Caco-2 (cell line): ENCODE measurements at regions of chr5 and their contacts with region 1.

Region 1: GRCh38 chr5:88140856-88141752 is 127.5 kb downstream of the TMEM161B start:
- DNase-seq: peak; percentile 97 to 98
- H3K4me3 ChIP-seq: peak overlapping the region; percentile 52
- H3K4me3 Mint-ChIP-seq: no peak overlapping the region
- H3K27ac Mint-ChIP-seq: no peak overlapping the region
- H3K4me1 ChIP-seq: no peaks in the 10 kb centered on the region; the same call in 1 of the 2 replicates
- H3K4me1 Mint-ChIP-seq: no peaks in the 10 kb centered on the region
- H3K27me3 ChIP-seq: no peaks in the 10 kb centered on the region
- H3K27me3 Mint-ChIP-seq: peaks cover 2% of the 10 kb centered on the region
- CTCF ChIP-seq: peak; percentile 69 to 84

Region 2: GRCh38 chr5:87780831-87781760 is 360.0 kb before region 1 on chr5:
- CTCF ChIA-PET with region 1: interaction called, 6 read pairs
- POLR2A ChIA-PET with region 1: no interaction called
- intact Hi-C with region 1: loop called (anchors 1 kb)
- DNase-seq: peak; percentile 73 to 78
- H3K4me3 ChIP-seq: no peak overlapping the region
- H3K4me3 Mint-ChIP-seq: no peak overlapping the region
- H3K27ac Mint-ChIP-seq: no peak overlapping the region
- H3K4me1 ChIP-seq: no peaks in the 10 kb centered on the region
- H3K4me1 Mint-ChIP-seq: no peaks in the 10 kb centered on the region
- H3K27me3 ChIP-seq: no peaks in the 10 kb centered on the region
- H3K27me3 Mint-ChIP-seq: no peaks in the 10 kb centered on the region
- CTCF ChIP-seq: peak; percentile 86 to 92

Region 3: DNA sequence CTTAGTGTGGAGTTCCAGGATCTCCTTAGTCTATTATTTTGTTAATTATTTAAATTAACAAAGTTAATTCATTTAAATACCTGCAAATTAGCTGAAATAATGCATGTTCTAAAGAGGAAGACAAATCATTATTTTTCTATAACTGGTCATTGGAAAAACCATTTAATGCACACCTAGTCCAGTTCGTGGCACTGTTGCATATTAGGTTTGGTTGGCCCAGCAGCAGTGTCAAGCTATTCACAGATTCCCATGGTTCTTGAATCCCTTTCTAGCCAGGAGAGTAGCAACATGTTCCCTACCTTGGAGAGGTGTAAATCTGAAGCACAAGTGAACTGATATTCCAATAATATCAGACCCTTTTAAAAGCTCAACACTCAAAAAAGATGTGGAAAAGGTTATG is 27.7 kb before region 1 on chr5:
- CTCF ChIA-PET with region 1: no interaction called
- POLR2A ChIA-PET with region 1: no interaction called
- intact Hi-C with region 1: loop called (anchors 2 kb)
- DNase-seq: no peak
- H3K4me3 ChIP-seq: no peak overlapping the region
- H3K4me3 Mint-ChIP-seq: no peak overlapping the region
- H3K27ac Mint-ChIP-seq: no peak overlapping the region
- H3K4me1 ChIP-seq: peaks cover 10% of the 10 kb centered on the region
- H3K4me1 Mint-ChIP-seq: no peaks in the 10 kb centered on the region
- H3K27me3 ChIP-seq: no peaks in the 10 kb centered on the region
- H3K27me3 Mint-ChIP-seq: no peaks in the 10 kb centered on the region
- CTCF ChIP-seq: peak in 1 of 2 experiments; percentile 16

Region 4: DNA sequence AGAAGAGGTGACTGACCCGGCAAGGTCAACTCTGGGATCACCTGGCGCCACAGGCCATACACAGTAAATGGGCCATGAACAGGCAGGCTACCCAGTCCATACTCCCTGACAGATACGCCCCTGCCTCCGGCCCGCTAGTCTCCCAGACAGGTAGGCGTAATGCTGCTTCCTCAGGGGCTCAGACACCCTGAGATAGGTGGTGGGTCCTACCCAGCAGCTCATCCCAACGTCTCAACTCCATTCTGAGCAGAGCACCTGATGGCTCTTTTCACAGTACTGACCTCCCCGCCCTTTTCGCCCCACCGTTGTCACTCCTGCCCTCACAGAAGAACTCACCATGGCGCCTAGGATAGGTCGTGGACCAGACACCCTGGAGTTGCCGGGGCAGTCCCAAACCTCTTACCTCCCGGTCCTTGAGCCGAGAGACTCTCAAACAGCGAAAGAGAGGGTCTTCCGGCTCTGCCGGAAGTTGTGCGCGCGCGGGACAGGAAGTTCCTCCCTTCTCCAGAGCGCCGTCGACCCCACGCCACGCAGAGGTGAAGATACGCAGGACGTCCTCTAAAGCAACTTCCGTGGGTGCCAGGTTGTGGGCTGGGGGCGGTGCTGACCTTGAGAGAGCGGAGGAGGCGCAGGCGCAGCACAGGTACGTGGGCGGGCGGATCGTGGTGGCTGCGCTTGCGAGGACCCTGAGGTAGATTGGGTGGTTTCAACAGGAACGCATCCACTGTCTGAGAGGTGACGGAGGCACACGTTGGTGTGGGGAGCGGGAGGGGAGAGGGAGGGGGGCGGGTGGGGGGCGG is 127.5 kb after region 1 on chr5 and contains the start of gene TMEM161B:
- CTCF ChIA-PET with region 1: interaction called, 9 read pairs
- POLR2A ChIA-PET with region 1: no interaction called
- intact Hi-C with region 1: loop called (anchors 1 kb)
- DNase-seq: peak; percentile 93 to 96
- H3K4me3 ChIP-seq: peak within 1 kb of the TSS; percentile 60
- H3K4me3 Mint-ChIP-seq: peak within 1 kb of the TSS; percentile 98
- H3K27ac Mint-ChIP-seq: peak within 1 kb of the TSS; percentile 98
- H3K4me1 ChIP-seq: peaks cover 6% of the 10 kb centered on the region
- H3K4me1 Mint-ChIP-seq: peaks cover 16% of the 10 kb centered on the region
- H3K27me3 ChIP-seq: no peaks in the 10 kb centered on the region
- H3K27me3 Mint-ChIP-seq: no peaks in the 10 kb centered on the region
- CTCF ChIP-seq: no peak
- total RNA-seq, gene TMEM161B: 22.1 and 27.0 TPM in 2 replicates

Region 5: GRCh38 chr5:88680253-88681132 is 539.4 kb after region 1 on chr5:
- CTCF ChIA-PET with region 1: no interaction called
- POLR2A ChIA-PET with region 1: no interaction called
- intact Hi-C with region 1: loop called (anchors 1 kb)
- DNase-seq: peak; percentile 58 to 86
- H3K4me3 ChIP-seq: peak overlapping the region; percentile 32
- H3K4me3 Mint-ChIP-seq: peak overlapping the region; percentile 48
- H3K27ac Mint-ChIP-seq: no peak overlapping the region
- H3K4me1 ChIP-seq: 0 out of 2 replicates have a peak, but pooled peaks cover 9% of the 10 kb centered on the region
- H3K4me1 Mint-ChIP-seq: peaks cover 11% of the 10 kb centered on the region
- H3K27me3 ChIP-seq: peaks cover 1% of the 10 kb centered on the region
- H3K27me3 Mint-ChIP-seq: peaks cover 50% of the 10 kb centered on the region
- CTCF ChIP-seq: peak; percentile 92